ENCODE measurements at regions of chr9 and their contacts with region 1.

Region 1: DNA sequence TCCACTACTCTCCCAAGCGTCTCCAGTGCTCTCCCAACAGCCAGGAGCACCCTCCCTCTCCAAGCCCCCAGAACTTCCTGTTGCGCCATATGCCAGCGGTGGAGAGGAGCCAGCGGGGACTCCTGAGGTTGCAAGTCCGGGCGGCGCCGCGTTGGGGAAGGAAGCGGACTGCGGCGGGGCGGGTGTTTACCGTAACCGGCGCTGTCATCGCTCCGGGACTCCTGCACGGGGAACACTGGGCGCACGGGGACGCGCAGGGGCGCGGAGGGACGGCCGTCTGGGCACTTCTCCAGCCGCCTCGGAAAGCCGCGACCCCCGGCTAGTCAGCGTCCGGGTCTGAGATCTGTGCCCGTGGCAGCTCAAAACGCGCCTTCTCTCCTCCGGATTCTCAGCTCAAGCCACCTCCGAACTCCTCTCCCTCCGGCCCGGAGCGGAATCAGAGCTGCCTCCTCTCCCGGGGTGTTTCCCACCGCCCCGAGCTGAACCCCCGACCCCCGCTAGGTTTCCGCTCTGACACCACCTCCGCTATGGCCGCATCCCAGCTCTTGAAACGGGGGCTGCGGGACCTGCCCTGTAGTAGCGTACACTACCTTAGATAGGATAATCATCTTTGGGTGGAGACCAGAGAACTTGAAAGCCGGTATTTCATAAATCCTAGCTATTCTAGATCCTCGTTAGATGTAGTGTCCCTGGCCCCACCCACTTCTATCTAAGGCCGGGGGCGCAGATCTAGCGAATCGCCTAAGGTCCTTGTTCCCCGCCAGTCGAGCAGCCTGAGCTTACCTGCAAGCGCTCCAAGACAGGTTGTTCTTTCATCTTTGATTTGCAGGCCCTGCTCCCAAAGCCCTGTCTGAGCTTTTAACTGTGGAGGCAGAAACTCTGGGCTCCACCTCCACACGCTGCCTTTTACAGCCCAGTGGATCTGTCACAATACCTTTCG is at the start of gene TRPM6:
- DNase-seq: peak; percentile 59 to 98 (median 87)
- ATAC-seq: peak; percentile 95
- H3K4me3 ChIP-seq: peak within 1 kb of the TSS; percentile 56 to 60
- H3K27ac ChIP-seq: peak within 1 kb of the TSS; percentile 45 to 94
- H3K4me1 ChIP-seq: peaks cover 0 to 13% of the 10 kb centered on the region in 2 donors
- H3K27me3 ChIP-seq: no peaks in the 10 kb centered on the region
- CTCF ChIP-seq: no peak
- polyA plus RNA-seq, gene TRPM6: 0.43 to 1.0 (median 0.65) TPM

Region 2: DNA sequence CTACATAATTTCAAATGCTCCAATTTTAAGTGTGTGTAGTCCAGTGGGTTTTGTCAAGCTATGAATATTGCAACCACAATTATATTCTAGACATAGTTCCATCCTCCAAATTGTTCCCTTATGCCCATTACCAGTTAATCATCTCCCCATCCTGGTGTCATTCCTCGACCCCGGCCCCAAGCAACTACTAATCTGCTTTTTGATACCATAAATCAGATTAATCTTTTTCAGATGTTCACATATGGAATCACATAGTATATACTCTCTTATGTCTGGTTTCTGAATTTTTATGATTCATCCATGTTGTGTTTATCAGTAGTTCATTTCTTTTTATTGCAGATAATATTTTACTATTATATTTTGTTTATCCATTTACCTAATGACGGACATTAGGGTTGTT is 538.5 kb before region 1 on chr9:
- intact Hi-C with region 1: no loop called
- DNase-seq: no peak
- ATAC-seq: no peak
- H3K4me3 ChIP-seq: no peak overlapping the region
- H3K27ac ChIP-seq: no peak overlapping the region
- H3K4me1 ChIP-seq: no peaks in the 10 kb centered on the region
- H3K27me3 ChIP-seq: no peaks in the 10 kb centered on the region
- CTCF ChIP-seq: no peak

Region 3: GRCh38 chr9:74609671-74610405 is 277.5 kb before region 1 on chr9:
- intact Hi-C with region 1: no loop called
- DNase-seq: no peak
- ATAC-seq: no peak
- H3K4me3 ChIP-seq: no peak overlapping the region
- H3K27ac ChIP-seq: no peak overlapping the region
- H3K4me1 ChIP-seq: no peaks in the 10 kb centered on the region
- H3K27me3 ChIP-seq: no peaks in the 10 kb centered on the region
- CTCF ChIP-seq: no peak

Region 4: DNA sequence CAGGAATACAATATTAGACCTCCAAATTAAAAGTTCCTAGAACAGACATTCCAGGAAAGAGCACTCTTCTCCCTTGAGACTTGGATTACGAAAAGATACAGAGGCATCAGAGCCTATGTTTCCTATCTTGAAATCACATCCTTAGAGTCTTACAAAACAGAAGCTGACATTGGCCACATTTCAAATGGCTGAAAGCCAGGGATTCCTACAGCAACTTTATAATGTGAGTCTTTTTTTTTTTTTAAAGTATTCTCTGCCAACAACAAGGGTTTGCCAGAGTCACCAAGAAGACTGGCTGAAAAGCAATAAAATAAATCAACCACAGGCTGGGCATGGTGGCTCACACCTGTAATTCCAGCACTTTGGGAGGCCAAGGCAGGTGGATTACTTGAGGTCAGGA is 62.7 kb before region 1 on chr9:
- intact Hi-C with region 1: loop called in 1 of 2 experiments (anchors 10 kb)
- DNase-seq: peak in 2 of 4 donors; percentile 45 to 84
- ATAC-seq: no peak
- H3K4me3 ChIP-seq: no peak overlapping the region
- H3K27ac ChIP-seq: no peak overlapping the region
- H3K4me1 ChIP-seq: no peaks in the 10 kb centered on the region
- H3K27me3 ChIP-seq: no peaks in the 10 kb centered on the region
- CTCF ChIP-seq: no peak

Region 5: GRCh38 chr9:75210215-75210614 is 322.9 kb after region 1 on chr9:
- intact Hi-C with region 1: no loop called
- DNase-seq: no peak
- ATAC-seq: no peak
- H3K4me3 ChIP-seq: no peak overlapping the region
- H3K27ac ChIP-seq: no peak overlapping the region
- H3K4me1 ChIP-seq: no peaks in the 10 kb centered on the region
- H3K27me3 ChIP-seq: no peaks in the 10 kb centered on the region
- CTCF ChIP-seq: no peak